Caco-2 (cell line): ENCODE measurements at regions of chr17 and their contacts with region 1.

Region 1: GRCh38 chr17:47066841-47067682 is 88.0 kb upstream of the RPRML start:
- DNase-seq: peak; percentile 88 to 94
- H3K4me3 ChIP-seq: peak overlapping the region; percentile 49
- H3K4me3 Mint-ChIP-seq: peak overlapping the region; percentile 96
- H3K27ac Mint-ChIP-seq: peak overlapping the region; percentile 98
- H3K4me1 ChIP-seq: peaks cover 10% of the 10 kb centered on the region; the same call in 1 of the 2 replicates
- H3K4me1 Mint-ChIP-seq: peaks cover 10% of the 10 kb centered on the region
- H3K27me3 ChIP-seq: no peaks in the 10 kb centered on the region
- H3K27me3 Mint-ChIP-seq: no peaks in the 10 kb centered on the region
- CTCF ChIP-seq: peak in 1 of 2 experiments; percentile 21

Region 2: DNA sequence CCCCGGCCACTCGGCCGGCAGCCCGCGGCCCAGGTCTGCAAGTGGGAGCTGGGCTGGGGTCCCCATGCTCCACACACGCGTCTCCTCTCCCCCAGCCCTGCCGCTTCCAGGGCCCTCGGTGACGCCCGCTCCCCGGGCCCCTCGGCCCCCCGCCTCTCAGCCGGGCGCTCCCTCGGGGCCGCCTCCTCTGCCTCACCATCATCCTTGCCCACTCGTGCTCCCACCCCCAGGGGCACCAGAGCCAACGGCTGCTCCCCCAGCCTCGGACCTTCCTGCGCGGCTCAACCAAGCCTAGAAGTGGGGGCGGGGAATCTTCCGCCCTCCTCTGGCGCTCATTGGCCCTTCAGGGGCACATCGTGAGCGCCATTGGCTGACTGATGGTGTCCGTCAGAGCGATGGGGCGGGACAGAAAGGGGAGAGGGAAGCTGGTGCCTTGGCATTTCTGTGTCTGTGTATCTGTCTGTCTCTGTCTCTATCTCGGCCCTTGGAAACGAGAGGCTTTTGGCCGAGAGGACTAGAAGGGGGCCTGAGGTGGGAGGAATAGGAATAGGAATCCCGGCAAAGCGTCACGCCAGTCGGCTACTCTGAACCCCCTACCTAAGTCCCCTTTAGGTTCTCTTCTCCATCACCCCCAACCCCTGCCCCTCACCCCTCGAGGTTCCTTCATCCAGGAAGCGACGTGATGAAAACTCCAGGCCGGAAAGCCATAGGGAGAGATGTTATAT is 33.1 kb after region 1 on chr17:
- CTCF ChIA-PET with region 1: interaction called, 4 read pairs
- POLR2A ChIA-PET with region 1: no interaction called
- intact Hi-C with region 1: loop called (anchors 2 kb)
- DNase-seq: peak; percentile 95
- H3K4me3 ChIP-seq: peak overlapping the region; percentile 84
- H3K4me3 Mint-ChIP-seq: peak overlapping the region; percentile 81
- H3K27ac Mint-ChIP-seq: peak overlapping the region; percentile 89
- H3K4me1 ChIP-seq: no peaks in the 10 kb centered on the region
- H3K4me1 Mint-ChIP-seq: no peaks in the 10 kb centered on the region
- H3K27me3 ChIP-seq: no peaks in the 10 kb centered on the region
- H3K27me3 Mint-ChIP-seq: no peaks in the 10 kb centered on the region
- CTCF ChIP-seq: no peak

Region 3: DNA sequence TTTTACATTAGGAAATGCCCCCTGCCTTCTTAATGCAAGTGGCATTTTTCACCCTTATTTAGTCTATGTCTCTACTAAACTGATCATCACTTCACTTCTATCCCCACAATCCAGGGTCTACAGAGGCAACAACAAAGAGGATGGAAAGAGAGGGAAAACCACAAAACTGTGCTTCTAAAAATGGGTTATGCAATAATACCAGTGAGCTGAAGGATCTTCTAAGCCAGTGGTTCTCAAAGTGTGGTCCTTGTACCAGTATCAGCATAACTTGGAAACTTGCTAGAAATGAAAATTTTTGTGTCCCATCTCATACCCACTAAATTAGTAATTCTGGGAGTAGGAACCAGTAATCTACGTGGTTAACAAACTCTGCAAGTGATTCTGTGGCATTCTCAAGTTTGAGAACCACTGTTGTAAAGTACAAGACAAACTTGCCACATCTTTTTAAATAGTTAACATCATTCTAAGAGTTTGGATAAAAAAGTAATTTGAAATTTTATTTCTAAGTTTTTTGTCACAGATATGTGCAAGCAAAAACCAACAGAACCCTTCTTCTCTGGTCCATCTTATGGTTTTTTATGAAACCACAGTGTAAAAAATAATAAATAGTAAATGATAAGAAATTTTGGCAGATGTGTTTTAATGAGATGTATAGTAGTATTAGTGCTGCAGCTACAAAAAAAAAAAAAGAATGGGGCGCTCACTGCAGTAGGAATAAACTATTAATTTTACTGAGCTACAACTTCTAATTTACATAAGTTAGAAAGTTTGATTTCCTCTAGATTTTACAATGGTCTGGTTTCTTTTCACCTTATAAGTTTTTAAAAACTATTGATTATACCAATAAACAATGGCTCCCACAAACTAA is 105.9 kb after region 1 on chr17:
- CTCF ChIA-PET with region 1: no interaction called
- POLR2A ChIA-PET with region 1: no interaction called
- intact Hi-C with region 1: no loop called
- DNase-seq: no peak
- H3K4me3 ChIP-seq: no peak overlapping the region
- H3K4me3 Mint-ChIP-seq: no peak overlapping the region
- H3K27ac Mint-ChIP-seq: no peak overlapping the region
- H3K4me1 ChIP-seq: no peaks in the 10 kb centered on the region
- H3K4me1 Mint-ChIP-seq: no peaks in the 10 kb centered on the region
- H3K27me3 ChIP-seq: no peaks in the 10 kb centered on the region
- H3K27me3 Mint-ChIP-seq: no peaks in the 10 kb centered on the region
- CTCF ChIP-seq: no peak